Activated CD4-positive, alpha-beta T cell treated with anti-CD3 and anti-CD28 coated beads for 36 hours (primary cell): ENCODE measurements at regions of chr13 and their contacts with region 1.

Region 1: DNA sequence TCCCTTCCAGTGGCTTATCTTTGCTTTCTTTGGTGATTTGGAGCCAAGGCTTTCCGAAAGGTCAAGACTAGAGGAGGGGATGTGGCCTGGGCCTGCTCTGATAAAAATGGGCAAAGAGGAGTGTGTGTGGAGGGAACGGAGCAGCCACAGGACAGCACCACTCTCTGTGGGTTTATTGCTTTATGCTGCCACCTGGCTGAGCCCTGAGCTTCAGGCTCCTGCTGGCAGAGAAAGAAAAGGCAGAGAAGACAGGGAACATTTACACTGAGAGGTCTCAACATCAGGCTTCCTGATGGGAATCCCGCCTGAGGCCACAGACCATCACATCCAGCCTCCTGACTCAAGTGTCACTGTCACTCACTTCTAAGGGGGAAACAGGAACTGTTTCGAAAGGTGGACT is 9.2 kb upstream of the GSX1 start:
- DNase-seq: no peak
- ATAC-seq: no peak
- H3K4me3 Mint-ChIP-seq: no peak overlapping the region
- H3K27ac Mint-ChIP-seq: no peak overlapping the region
- H3K4me1 Mint-ChIP-seq: no peaks in the 10 kb centered on the region
- H3K27me3 Mint-ChIP-seq: peaks cover 19% of the 10 kb centered on the region

Region 2: GRCh38 chr13:27691207-27691606 is 91.9 kb before region 1 on chr13:
- CTCF ChIA-PET with region 1: no interaction called
- POLR2A ChIA-PET with region 1: no interaction called
- intact Hi-C with region 1: no loop called
- DNase-seq: no peak
- ATAC-seq: no peak
- H3K4me3 Mint-ChIP-seq: no peak overlapping the region
- H3K27ac Mint-ChIP-seq: no peak overlapping the region
- H3K4me1 Mint-ChIP-seq: no peaks in the 10 kb centered on the region
- H3K27me3 Mint-ChIP-seq: peaks cover 2% of the 10 kb centered on the region

Region 3: DNA sequence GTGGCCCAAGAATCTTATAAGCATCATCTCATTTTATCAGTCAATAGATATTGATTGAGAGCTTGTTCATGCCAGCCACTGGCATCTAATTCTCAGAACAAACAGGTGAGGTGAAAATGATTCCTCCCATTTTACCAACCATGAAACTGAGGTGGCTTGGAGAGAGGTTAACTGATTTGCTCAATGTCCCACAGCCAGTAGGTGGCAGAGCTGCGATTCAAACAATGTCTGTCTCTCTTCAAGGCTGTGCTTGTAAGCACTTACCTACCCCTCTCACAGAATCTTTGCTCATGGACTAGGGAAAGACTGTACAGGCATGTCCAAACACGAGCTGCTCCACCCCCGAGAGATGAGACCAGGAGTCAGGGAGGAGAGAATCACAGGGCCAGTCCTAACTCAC is 12.3 kb before region 1 on chr13:
- CTCF ChIA-PET with region 1: interaction called, 13 read pairs
- POLR2A ChIA-PET with region 1: no interaction called
- intact Hi-C with region 1: no loop called
- DNase-seq: peak; percentile 59
- ATAC-seq: no peak
- H3K4me3 Mint-ChIP-seq: no peak overlapping the region
- H3K27ac Mint-ChIP-seq: no peak overlapping the region
- H3K4me1 Mint-ChIP-seq: no peaks in the 10 kb centered on the region
- H3K27me3 Mint-ChIP-seq: peaks cover 11% of the 10 kb centered on the region

Region 4: GRCh38 chr13:27797228-27797624 is 14.1 kb after region 1 on chr13:
- CTCF ChIA-PET with region 1: no interaction called
- POLR2A ChIA-PET with region 1: no interaction called
- intact Hi-C with region 1: no loop called
- DNase-seq: no peak
- ATAC-seq: no peak
- H3K4me3 Mint-ChIP-seq: no peak overlapping the region
- H3K27ac Mint-ChIP-seq: no peak overlapping the region
- H3K4me1 Mint-ChIP-seq: peaks cover 12% of the 10 kb centered on the region
- H3K27me3 Mint-ChIP-seq: peaks cover 72% of the 10 kb centered on the region